Activated CD4-positive, alpha-beta T cell treated with anti-CD3 and anti-CD28 coated beads, Interleukin-2, amount 10 ng/mL, durations not matched to agents 24 days and 14 days (primary cell): ENCODE measurements at regions of chr2 and their contacts with region 1.

Region 1: DNA sequence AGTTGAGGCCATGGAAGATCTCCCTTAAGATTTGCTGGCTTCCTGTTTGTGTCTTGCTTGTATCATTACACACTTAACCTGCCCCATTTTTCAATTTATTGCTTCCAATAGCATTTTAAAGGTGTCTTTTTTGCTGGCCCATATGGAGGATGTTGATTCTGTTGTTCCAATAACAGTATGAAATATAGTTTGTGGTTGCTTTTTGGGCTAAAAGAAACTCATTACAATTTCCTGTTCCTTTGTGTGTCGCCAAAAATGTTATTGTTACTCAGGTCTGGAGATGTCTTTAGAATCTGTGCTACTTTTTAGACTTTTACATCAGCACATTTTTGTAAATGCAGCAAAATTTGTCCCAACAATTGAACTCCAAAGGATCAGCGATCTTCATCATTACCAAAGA is 234.0 kb upstream of the ITGA4 start:
- DNase-seq: peak; percentile 59
- H3K4me3 Mint-ChIP-seq: peak overlapping the region; percentile 71
- H3K27ac Mint-ChIP-seq: peak overlapping the region; percentile 96
- H3K4me1 Mint-ChIP-seq: peaks cover 29% of the 10 kb centered on the region
- H3K27me3 Mint-ChIP-seq: no peaks in the 10 kb centered on the region

Region 2: DNA sequence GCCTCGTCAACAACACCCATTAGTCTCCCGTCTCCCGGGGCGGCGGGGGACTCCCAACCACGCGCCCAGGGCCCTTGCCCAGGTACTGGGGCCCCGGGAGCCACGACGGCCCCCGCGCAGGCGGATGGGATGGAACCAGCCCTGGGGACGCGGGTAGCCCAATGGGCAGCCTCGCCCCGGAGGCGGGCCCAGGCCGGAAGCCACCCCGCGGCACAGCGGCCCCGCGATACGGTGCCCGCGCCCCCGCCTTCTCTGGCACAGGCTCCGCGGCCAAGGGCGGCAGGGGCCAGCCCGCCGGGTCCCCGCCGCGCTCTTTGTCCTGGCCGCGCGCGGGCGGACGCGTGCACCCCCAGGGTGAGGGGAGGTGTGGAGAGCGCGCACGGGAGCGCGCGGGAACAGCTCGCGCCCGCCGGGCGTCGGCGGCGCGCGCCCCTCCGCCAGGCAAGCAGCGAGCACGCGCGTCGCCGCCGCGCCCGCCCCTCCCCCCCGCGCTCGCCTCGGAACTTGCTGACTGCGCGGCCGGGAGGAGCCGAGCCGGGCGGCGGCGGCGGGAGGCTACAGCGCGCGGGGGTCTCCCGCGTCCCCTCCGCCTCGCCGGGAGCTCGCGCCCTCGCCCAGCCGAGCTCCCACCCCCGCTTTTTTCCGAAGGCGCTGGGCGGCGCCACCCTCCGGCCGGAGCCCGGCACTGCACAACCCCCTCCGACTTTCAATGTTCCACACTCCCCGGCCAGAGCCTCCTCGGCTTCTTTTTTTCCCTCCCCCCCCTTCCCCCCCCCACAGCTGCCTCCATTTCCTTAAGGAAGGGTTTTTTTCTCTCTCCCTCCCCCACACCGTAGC is 242.9 kb before region 1 on chr2 and contains the start of gene UBE2E3:
- intact Hi-C with region 1: no loop called
- DNase-seq: peak; percentile 94
- H3K4me3 Mint-ChIP-seq: peak within 1 kb of the TSS; percentile 89
- H3K27ac Mint-ChIP-seq: peak within 1 kb of the TSS; percentile 97
- H3K4me1 Mint-ChIP-seq: peaks cover 34% of the 10 kb centered on the region
- H3K27me3 Mint-ChIP-seq: peaks cover 38% of the 10 kb centered on the region
- total RNA-seq, gene UBE2E3: 53.9 and 54.9 TPM in 2 replicates

Region 3: GRCh38 chr2:181197140-181197760 is 26.0 kb before region 1 on chr2:
- intact Hi-C with region 1: loop called (anchors 2 kb)
- DNase-seq: peak; percentile 57
- H3K4me3 Mint-ChIP-seq: peak overlapping the region; percentile 48
- H3K27ac Mint-ChIP-seq: peak overlapping the region; percentile 88
- H3K4me1 Mint-ChIP-seq: peaks cover 45% of the 10 kb centered on the region
- H3K27me3 Mint-ChIP-seq: no peaks in the 10 kb centered on the region

Region 4: DNA sequence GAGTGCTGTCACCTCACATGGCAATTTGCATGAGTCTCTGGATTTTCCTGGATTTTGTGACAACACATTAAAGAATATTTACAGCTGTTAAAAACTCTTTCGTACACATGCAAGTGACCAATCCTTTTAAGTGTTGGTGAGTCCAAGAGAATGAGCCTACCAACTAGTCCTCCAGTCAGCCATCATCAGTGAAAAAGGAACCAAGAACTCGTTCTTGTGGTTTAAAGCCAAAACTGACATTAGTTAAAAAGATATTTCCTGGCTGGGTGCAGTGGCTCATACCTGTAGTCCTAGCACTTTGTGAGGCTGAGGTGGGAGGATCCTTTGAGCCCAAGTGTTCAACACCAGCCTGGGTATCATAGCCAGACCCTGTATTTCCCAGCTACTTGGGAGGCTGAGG is 18.6 kb after region 1 on chr2:
- intact Hi-C with region 1: loop called (anchors 2 kb)
- DNase-seq: peak; percentile 59
- H3K4me3 Mint-ChIP-seq: no peak overlapping the region
- H3K27ac Mint-ChIP-seq: peak overlapping the region; percentile 40
- H3K4me1 Mint-ChIP-seq: peaks cover 29% of the 10 kb centered on the region
- H3K27me3 Mint-ChIP-seq: no peaks in the 10 kb centered on the region